SK-N-SH (cell line): ENCODE measurements at regions of chr14 and their contacts with region 1.

Region 1: GRCh38 chr14:80987235-80988032 is 32.0 kb downstream of the TSHR start:
- DNase-seq: peak; percentile 69
- H3K4me3 ChIP-seq: peak overlapping the region in 1 of 2 experiments; percentile 42; a peak in 1 of 4 replicates
- H3K27ac ChIP-seq: no peak overlapping the region
- H3K4me1 ChIP-seq: no peaks in the 10 kb centered on the region; a peak in 1 of 4 replicates
- H3K27me3 ChIP-seq: peaks cover 13% of the 10 kb centered on the region; the same call in 1 of the 2 replicates
- CTCF ChIP-seq: peak; percentile 97
- EP300 ChIP-seq: no peak
- RAD21 ChIP-seq: peak; percentile 85

Region 2: DNA sequence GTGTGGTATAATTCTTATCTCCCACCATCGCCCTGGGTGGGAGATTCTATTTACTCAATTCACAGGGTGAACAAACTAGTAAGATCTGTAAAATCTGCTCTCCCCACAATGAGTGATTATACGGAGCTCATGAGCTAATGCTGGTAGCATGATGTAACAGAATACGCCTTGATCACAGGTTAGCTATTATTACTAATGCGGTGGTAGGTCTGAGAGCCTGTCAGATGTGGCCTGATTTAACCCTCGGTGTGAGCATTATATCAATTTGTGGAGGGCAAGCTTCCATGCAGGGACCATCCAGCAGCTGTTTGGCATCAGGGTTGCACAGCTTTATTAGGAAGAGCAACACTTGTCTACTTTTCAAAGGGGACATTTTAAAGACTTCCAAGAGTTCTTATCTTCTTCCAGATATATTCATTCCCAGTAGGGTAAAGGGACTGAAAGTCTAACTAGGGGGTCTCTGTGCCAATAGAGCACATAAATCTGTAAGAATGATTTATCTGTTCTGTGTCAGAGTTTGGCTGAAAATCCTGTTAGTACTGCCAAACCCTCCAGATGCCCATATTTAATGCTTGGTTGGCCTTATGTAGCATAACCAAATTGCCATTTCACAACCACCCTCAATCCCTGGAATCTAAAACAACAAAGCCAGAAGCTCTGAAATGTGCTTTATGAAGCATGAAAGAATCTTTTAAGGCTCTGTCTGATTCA is 13.3 kb before region 1 on chr14:
- CTCF ChIA-PET with region 1: interaction called, 17 read pairs
- POLR2A ChIA-PET with region 1: no interaction called
- DNase-seq: no peak
- H3K4me3 ChIP-seq: no peak overlapping the region
- H3K27ac ChIP-seq: no peak overlapping the region
- H3K4me1 ChIP-seq: no peaks in the 10 kb centered on the region; a peak in 1 of 4 replicates
- H3K27me3 ChIP-seq: 0 out of 2 replicates have a peak, but pooled peaks cover 5% of the 10 kb centered on the region
- CTCF ChIP-seq: no peak
- EP300 ChIP-seq: no peak
- RAD21 ChIP-seq: no peak